ENCODE measurements at regions of chr17 and their contacts with region 1.

Region 1: GRCh38 chr17:54353789-54354525 is 531.2 kb downstream of the KIF2B start:
- DNase-seq: no peak
- H3K4me3 ChIP-seq: no peak overlapping the region
- H3K27ac ChIP-seq: no peak overlapping the region
- H3K4me1 ChIP-seq: no peaks in the 10 kb centered on the region
- H3K27me3 ChIP-seq: no peaks in the 10 kb centered on the region
- CTCF ChIP-seq: no peak

Region 2: DNA sequence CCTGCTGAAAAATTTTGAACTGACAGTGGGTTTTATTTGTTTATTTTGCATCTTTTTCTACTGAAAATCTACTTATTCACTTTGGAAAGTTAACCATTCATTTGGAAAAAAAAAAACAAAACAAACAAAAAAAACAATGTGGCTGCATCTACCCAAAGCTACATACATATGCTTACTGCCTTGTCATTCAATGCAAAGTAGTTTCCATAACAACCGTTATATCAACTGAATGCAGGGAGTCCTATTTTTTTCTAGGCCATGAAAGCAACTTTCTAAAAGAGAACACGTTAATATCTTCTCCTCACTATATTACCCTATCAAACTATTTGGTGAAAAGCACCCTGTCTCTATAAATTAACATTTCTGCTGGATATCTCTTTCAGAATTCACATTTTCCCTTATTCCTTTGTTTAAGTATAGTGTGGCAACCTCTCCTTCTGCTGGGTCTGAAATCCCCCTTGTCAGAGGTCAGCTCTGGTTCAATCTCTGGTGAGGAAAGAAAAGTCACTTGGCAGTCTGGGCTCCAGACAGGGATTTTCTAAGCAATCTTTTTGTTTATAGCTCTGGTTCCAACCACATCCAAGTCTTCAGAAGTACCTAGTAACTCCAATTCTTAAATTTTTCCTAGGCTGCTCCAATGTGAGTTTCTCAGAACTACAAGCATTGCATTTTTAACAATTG is 18.3 kb after region 1 on chr17:
- CTCF ChIA-PET with region 1: no interaction called
- POLR2A ChIA-PET with region 1: no interaction called
- intact Hi-C with region 1: loop called (anchors 1 kb)
- DNase-seq: no peak
- H3K4me3 ChIP-seq: no peak overlapping the region
- H3K27ac ChIP-seq: no peak overlapping the region
- H3K4me1 ChIP-seq: no peaks in the 10 kb centered on the region
- H3K27me3 ChIP-seq: no peaks in the 10 kb centered on the region
- CTCF ChIP-seq: no peak